Posterior vena cava (tissue), 2 donors: ENCODE measurements at regions of chr4 and their contacts with region 1.

Region 1: GRCh38 chr4:188117631-188118307 is 8.4 kb upstream of the TRIML2 start:
- DNase-seq: no peak

Region 2: GRCh38 chr4:186657764-186658163 is 1460.0 kb before region 1 on chr4:
- intact Hi-C with region 1: loop called in 1 of 2 experiments (anchors 5 kb)
- DNase-seq: no peak

Region 3: GRCh38 chr4:188145601-188146000 is 27.8 kb after region 1 on chr4:
- intact Hi-C with region 1: loop called in 1 of 2 experiments (anchors 1 kb)
- DNase-seq: no peak